ENCODE measurements at regions of chr14 and their contacts with region 1.

Region 1: DNA sequence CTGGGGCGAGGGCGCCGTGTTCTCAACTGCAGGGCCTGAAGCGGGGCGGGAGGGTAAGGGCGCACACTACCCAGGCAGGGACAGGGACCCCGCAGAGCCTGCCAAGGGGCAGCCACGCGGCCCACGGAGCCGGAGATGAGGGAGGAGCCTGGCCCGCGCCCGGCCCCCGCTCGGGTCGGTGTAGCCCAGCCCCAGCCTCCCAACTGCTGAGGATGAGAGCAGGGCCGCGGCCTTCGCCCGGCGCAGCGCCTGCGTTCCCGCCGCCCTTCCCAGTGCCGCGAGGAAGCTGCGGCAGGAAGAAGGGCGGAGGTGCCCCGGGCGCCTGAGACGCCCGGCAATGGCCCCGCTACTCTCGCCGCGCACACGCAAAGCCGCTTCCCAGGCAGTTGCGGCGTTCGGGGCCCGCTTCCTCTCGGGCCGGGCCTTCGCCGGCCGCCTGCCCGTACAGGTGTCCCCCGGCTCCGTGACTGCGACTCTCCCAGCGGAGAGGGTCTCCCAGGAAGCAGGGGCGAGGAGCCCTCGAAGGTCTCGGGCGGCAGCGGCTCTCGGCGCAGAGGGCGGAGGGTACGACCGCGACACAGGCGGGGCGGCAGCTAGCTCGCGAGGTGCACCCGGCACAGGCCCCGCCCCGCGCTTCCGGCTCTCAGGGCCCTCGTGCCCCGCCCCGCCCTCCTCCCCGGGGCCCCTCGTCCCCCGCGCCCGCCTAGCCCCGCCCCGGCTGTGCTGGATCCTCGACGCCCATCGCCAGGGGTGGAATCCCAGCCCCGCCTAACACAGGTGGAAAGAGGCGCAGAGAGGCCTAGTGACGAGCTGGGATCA is 24.8 kb upstream of the YY1 start:
- DNase-seq: peak; percentile 84 to 92
- ATAC-seq: peak; percentile 95 to 98 (median 97)
- H3K4me3 ChIP-seq: peak overlapping the region; percentile 52 to 91 (median 74)
- H3K27ac ChIP-seq: peak overlapping the region; percentile 57 to 98 (median 92)
- H3K4me1 ChIP-seq: peaks cover 0 to 19% (median 9%) of the 10 kb centered on the region in 9 donors
- H3K27me3 ChIP-seq: no peaks in the 10 kb centered on the region
- CTCF ChIP-seq: peak in 1 of 9 donors; percentile 7

Region 2: DNA sequence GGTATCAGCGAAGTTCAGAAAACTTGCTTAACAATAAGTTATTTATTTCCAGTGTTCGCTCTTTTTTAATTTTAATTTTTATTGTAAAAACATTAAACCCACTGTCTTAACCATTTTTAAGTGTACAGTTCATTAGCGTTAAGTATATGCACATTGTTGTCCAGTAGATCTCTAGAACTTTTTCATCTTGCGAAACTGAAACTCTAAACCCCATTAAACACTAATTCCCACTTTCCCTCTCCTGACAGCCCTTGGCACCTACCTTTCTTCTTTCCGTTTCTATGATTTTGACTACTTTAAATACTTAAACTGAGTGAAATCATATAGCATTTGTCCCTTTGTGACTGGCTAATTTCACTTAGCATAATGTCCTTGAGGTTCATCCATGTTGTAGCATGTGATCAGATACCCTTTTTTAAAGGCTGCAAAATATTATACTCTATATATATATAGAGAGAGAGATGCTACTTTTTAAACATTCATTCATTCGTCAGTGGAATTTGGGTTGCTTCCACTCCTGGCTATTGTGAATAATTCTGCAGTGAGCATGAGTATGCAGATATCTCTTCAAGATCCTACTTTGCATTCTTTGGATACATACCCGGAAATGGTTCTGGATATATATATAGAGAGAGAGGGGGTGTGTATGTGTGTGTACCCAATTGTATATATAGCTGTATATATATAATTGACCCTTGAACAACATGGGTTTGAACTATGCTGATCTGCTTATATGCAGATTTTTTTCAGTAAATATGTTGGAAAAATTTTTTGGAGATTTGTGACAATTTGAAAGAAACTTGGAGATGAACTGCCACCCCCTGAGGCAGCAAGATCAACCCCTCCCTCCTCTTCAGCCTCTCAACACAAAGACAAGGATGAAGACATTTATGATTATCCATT is 223.6 kb before region 1 on chr14:
- intact Hi-C with region 1: loop called in 1 of 10 experiments (anchors 5 kb)
- DNase-seq: no peak
- ATAC-seq: no peak
- H3K4me3 ChIP-seq: no peak overlapping the region
- H3K27ac ChIP-seq: no peak overlapping the region
- H3K4me1 ChIP-seq: peaks cover 0 to 4% (median 0%) of the 10 kb centered on the region in 9 donors
- H3K27me3 ChIP-seq: no peaks in the 10 kb centered on the region
- CTCF ChIP-seq: no peak

Measured in heart right ventricle (tissue), 16 donors.